ENCODE measurements at regions of chr10 and their contacts with region 1.

Region 1: DNA sequence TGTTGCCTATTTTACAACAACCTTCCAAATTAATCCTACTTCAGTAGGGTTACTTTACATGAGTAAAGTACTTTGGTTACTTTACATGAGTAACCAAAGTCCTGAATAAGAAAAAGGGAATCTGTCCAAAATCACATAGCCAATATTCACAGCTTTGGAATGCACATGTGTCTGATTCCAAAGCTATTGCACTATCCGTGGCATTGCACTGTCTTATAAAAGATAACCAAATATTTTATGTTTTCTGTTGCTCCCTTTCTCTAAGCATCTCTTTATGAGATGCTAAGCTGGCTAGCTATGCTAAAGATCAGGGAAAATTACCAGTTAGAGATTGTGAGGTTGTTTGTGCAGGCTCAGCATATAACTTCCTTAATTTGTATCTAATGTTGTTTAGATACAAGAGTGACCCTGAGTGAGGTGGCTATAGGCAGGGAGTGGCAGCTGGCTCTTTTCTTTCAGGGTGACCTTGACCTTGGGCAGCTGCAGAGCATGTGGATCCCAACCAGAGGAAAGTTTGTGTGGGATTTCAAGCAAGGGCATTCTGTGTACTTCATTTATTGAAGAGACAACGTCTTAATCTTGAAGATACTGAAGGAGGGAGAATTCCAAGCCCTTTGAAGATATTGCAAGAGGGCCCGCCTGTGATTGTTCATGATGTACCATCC is 366.1 kb upstream of the ANKRD30A start:
- DNase-seq: no peak
- H3K4me3 ChIP-seq: no peak overlapping the region
- H3K27ac ChIP-seq: no peak overlapping the region
- H3K4me1 ChIP-seq: no peaks in the 10 kb centered on the region
- CTCF ChIP-seq: no peak

Region 2: GRCh38 chr10:35642027-35642792 is 1117.1 kb before region 1 on chr10 and contains the start of gene FZD8:
- CTCF ChIA-PET with region 1: no interaction called
- POLR2A ChIA-PET with region 1: no interaction called
- intact Hi-C with region 1: no loop called
- DNase-seq: peak; percentile 90
- H3K4me3 ChIP-seq: peak within 1 kb of the TSS; percentile 81
- H3K27ac ChIP-seq: no peak within 1 kb of the TSS
- H3K4me1 ChIP-seq: peaks cover 17% of the 10 kb centered on the region
- CTCF ChIP-seq: peak; percentile 67
- total RNA-seq, gene FZD8: 4.7 and 4.9 TPM in 2 replicates

Region 3: DNA sequence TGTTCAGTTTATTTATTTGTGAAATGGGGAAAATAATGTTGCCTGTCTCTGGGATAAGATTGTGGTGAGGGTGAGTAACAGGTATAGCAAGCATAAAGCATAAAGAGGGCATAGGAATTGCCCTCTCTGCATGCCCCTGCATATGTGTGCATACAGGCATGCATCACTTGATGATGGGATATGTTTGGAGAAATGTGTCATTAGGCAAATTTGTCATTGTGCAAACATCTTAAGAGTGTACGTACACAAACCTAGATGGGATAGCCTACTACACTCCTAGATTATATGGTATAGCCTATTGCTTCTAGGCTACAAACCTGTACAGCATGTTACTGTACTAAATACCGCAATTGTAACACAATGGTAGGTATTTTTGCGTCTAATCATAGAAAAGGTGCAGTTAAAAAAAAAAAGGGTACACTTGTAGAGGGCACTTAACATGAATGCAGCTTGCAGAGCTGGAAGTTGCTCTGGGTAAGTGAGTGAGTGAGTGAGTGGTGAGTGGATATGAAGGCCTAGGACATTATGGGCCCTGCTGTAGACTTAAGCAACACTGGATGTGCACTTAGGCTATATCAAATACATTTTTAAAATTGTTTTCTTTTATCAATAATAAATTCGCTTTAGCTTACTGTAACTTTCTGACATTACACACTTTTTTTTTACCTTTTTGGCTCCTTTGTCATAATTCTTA is 20.4 kb before region 1 on chr10:
- CTCF ChIA-PET with region 1: no interaction called
- POLR2A ChIA-PET with region 1: interaction called, 10 read pairs
- intact Hi-C with region 1: no loop called
- DNase-seq: no peak
- H3K4me3 ChIP-seq: no peak overlapping the region
- H3K27ac ChIP-seq: no peak overlapping the region
- H3K4me1 ChIP-seq: no peaks in the 10 kb centered on the region
- CTCF ChIP-seq: no peak

Measured in OCI-LY7 (cell line).